Activated T-helper 1 cell treated with anti-CD3 and anti-CD28 coated beads, Interleukin-12 subunit alpha, Interleukin-12 subunit beta, Interleukin-2, Interleukin-4 antibody, amounts not matched to agents 30 ng/mL and 10 ng/mL and 1 ng/mL, durations not matched to agents 14 hours and 24 hours and 36 hours (primary cell): ENCODE measurements at regions of chr9 and their contacts with region 1.

Region 1: DNA sequence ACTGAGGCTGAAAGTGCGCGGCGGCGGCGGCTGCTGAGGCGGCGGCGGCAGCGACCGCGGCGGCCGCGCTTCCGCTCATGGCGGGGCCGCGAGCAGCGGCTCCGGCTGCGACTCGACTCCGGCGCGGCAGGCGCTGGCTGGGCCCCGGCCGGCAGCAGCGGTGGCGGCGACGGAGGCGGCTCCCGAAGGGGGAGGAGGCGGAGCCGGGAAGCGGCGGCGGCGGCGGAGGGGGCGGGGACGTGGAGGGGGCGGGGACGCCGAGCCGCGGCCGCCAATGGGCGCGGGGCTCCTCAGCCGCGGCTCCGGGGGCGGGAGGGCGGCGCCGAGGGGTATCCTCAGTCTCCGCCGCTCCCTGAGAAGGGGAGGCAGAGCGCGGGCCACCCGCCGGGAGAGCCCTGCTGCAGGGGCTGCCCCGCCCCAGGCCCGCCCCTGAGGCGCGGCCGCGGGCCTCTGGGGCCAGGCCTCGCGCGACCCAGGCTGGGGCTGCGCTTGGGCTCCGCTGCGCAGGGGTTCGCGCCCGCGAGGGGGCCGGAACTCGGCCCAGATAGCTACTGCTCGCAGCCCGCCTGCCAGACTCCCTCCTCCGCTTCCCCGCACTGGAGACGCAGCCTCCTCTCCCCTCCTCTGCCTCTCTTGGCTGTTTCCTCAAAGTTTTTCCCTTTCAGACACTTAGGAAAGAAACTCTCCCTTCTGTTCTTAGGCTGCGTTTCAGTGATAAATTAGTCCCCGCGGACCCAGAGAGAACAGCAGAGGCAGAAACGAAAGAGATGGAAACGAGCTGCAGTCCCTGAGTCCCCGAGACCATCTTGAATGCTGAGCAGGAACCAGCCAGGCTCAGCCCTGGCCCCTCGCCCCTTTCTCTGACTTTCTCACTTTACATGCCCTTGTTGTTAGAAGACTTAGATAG is 85.0 kb upstream of the MELK start:
- DNase-seq: peak; percentile 91
- H3K4me3 Mint-ChIP-seq: peak overlapping the region; percentile 87
- H3K27ac Mint-ChIP-seq: peak overlapping the region; percentile 87
- H3K4me1 Mint-ChIP-seq: peaks cover 53% of the 10 kb centered on the region
- H3K27me3 Mint-ChIP-seq: no peaks in the 10 kb centered on the region

Region 2: GRCh38 chr9:36258208-36258988 is 229.3 kb before region 1 on chr9 and contains the start of gene GNE:
- intact Hi-C with region 1: loop called (anchors 5 kb)
- DNase-seq: peak; percentile 98
- H3K4me3 Mint-ChIP-seq: peak within 1 kb of the TSS; percentile 96
- H3K27ac Mint-ChIP-seq: peak within 1 kb of the TSS; percentile 96
- H3K4me1 Mint-ChIP-seq: peaks cover 15% of the 10 kb centered on the region
- H3K27me3 Mint-ChIP-seq: no peaks in the 10 kb centered on the region
- total RNA-seq, gene GNE: 21.7 and 22.7 TPM in 2 replicates

Region 3: DNA sequence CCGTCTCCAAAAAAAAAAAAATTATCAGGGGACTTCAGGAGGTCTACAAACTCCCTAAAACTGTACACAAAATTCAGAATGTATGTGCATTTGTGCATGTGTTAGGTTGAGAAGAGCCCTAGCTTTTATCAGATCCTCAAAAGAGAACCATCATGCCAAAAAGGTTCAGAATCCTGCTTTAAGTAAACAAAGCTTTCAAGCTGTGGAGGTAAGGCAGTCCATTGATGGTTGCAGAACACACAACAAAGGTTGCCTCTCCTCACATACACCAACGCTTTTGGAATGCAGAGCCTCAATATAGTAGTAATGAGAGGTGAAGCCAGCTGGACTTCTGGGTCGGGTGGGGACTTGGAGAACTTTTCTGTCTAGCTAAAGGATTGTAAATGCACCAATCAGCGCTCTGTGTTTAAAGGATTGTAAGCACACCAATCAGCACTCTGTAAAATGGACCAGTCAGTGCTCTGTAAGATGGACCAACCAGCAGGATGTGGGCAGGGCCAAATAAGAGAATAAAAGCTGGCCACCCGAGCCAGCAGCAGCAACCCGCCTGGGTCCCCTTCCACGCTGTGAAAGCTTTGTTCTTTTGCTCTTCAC is 29.8 kb before region 1 on chr9:
- intact Hi-C with region 1: loop called (anchors 1 kb)
- DNase-seq: no peak
- H3K4me3 Mint-ChIP-seq: peak overlapping the region; percentile 48
- H3K27ac Mint-ChIP-seq: peak overlapping the region; percentile 69
- H3K4me1 Mint-ChIP-seq: peaks cover 51% of the 10 kb centered on the region
- H3K27me3 Mint-ChIP-seq: no peaks in the 10 kb centered on the region

Region 4: DNA sequence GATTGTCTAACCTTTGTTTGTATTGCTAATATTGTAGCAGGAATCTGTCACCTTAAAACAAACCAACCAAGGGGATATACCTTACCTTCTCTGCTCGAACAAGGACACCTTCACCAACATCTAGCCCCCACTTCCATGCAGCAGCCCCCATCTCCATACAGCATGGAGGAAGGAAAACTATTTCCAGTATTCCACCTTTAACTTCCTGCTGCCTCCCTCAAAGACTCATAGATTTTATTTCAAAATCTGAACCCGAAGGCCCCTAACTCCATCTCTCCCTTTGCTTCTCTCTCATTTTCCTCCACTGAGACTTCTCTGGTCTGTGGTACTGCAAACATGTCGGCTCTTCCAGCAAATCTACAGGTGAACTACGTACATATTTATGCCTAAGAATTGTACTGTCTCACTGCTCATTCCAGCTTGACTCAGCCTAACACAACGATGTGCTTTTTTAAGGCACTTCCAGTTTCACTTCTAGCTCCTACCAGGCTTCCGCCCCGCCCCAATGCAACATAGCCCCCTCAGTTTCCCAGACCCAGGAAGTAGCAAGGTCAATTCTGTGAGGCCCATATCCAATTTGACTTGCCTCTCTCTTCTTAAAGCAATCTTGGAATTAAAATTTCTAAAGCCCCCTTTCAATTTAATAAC is 17.0 kb before region 1 on chr9:
- intact Hi-C with region 1: loop called (anchors 1 kb)
- DNase-seq: peak; percentile 54
- H3K4me3 Mint-ChIP-seq: peak overlapping the region; percentile 80
- H3K27ac Mint-ChIP-seq: peak overlapping the region; percentile 86
- H3K4me1 Mint-ChIP-seq: peaks cover 29% of the 10 kb centered on the region
- H3K27me3 Mint-ChIP-seq: no peaks in the 10 kb centered on the region

Region 5: GRCh38 chr9:36517131-36517530 is 29.4 kb after region 1 on chr9:
- intact Hi-C with region 1: no loop called
- DNase-seq: no peak
- H3K4me3 Mint-ChIP-seq: no peak overlapping the region
- H3K27ac Mint-ChIP-seq: no peak overlapping the region
- H3K4me1 Mint-ChIP-seq: no peaks in the 10 kb centered on the region
- H3K27me3 Mint-ChIP-seq: peaks cover 8% of the 10 kb centered on the region

Region 6: DNA sequence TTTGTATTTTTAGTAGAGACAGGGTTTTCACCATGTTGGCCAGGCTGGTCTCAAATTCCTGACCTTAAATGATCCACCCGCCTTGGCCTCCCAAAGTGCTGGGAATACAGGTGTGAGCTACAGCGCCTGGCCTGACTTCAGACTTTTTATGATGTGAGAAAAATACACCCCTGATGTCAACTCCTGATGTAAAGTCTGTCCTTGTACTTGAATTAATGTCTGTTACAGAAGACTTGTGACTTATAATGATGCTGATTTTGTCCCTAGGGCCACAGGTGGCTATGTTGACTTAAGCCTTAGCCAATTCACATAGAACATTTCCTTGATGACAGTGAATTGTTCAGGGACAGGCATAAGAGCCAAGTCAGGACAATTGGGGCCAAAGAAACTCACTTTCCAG is 42.5 kb after region 1 on chr9:
- intact Hi-C with region 1: no loop called
- DNase-seq: no peak
- H3K4me3 Mint-ChIP-seq: no peak overlapping the region
- H3K27ac Mint-ChIP-seq: no peak overlapping the region
- H3K4me1 Mint-ChIP-seq: peaks cover 9% of the 10 kb centered on the region
- H3K27me3 Mint-ChIP-seq: peaks cover 14% of the 10 kb centered on the region

Region 7: DNA sequence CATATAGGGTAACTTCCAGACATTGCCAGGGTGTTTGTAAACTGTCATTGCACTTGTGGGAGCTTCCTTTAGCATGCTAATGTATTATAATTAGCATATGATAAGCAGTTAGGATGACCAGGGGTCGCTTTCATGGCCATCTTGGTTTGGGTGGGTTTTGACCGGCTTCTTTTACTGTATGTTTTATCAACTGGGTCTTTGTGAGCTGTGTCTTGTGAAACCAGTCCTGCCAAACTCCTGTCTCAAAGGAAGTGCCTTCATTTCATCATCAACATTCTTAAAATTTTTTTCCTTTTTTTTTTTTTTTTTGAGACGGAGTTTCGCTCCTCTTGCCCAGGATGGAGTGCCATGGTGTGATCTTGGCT is 73.1 kb after region 1 on chr9:
- intact Hi-C with region 1: loop called (anchors 5 kb)
- DNase-seq: no peak
- H3K4me3 Mint-ChIP-seq: no peak overlapping the region
- H3K27ac Mint-ChIP-seq: no peak overlapping the region
- H3K4me1 Mint-ChIP-seq: no peaks in the 10 kb centered on the region
- H3K27me3 Mint-ChIP-seq: no peaks in the 10 kb centered on the region